Activated CD4-positive, alpha-beta T cell treated with anti-CD3 and anti-CD28 coated beads, Interleukin-2, amount 10 ng/mL, durations not matched to agents 24 days and 14 days (primary cell): ENCODE measurements at regions of chr17 and their contacts with region 1.

Region 1: DNA sequence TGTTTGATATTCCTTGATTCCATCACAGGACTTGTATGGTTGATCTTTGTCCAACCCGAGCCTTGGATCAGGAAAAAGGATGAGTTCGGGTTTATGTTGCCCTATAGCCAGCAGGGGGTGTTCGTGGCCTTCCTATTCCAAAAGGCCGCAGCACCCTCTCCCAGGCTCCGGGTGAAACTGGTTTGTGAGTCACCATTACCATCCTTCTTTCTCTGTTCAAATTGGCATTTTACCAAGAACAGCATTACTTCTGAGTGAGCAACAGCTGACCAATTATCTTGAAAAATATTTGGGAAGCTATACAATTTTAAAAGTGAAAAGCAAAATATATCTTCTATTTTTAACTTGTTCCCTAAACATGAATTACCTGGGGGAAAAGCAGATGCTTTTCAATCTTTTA is 24.3 kb upstream of the KRT20 start:
- DNase-seq: peak; percentile 85
- H3K4me3 Mint-ChIP-seq: no peak overlapping the region
- H3K27ac Mint-ChIP-seq: no peak overlapping the region
- H3K4me1 Mint-ChIP-seq: no peaks in the 10 kb centered on the region
- H3K27me3 Mint-ChIP-seq: peaks cover 27% of the 10 kb centered on the region

Region 2: DNA sequence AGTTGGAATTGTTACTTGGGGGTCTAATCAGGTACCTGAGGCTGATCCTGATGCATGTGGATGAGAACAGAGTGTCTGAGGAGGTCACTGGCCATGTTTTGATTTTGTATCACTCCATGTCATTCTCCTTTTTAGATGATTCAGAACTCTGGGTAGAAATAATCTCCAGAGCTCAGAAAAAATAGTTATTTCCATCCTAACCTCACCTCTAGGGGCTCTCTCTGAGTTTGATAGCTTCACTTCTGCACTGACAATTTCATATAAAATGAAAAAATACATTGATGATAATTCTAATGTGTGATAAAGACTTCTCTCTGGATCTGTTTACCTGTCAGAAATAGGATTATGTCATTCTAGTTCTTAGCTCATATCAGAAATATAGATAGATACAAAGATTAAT is 36.1 kb before region 1 on chr17:
- intact Hi-C with region 1: no loop called
- DNase-seq: no peak
- H3K4me3 Mint-ChIP-seq: no peak overlapping the region
- H3K27ac Mint-ChIP-seq: no peak overlapping the region
- H3K4me1 Mint-ChIP-seq: no peaks in the 10 kb centered on the region
- H3K27me3 Mint-ChIP-seq: peaks cover 35% of the 10 kb centered on the region

Region 3: GRCh38 chr17:41322094-41322902 is 412.9 kb after region 1 on chr17:
- intact Hi-C with region 1: loop called (anchors 1 kb)
- DNase-seq: no peak
- H3K4me3 Mint-ChIP-seq: no peak overlapping the region
- H3K27ac Mint-ChIP-seq: no peak overlapping the region
- H3K4me1 Mint-ChIP-seq: peaks cover 2% of the 10 kb centered on the region
- H3K27me3 Mint-ChIP-seq: peaks cover 2% of the 10 kb centered on the region

Region 4: GRCh38 chr17:41496820-41497408 is 587.6 kb after region 1 on chr17:
- intact Hi-C with region 1: loop called (anchors 2 kb)
- DNase-seq: peak; percentile 91
- H3K4me3 Mint-ChIP-seq: peak overlapping the region; percentile 17
- H3K27ac Mint-ChIP-seq: peak overlapping the region; percentile 30
- H3K4me1 Mint-ChIP-seq: peaks cover 13% of the 10 kb centered on the region
- H3K27me3 Mint-ChIP-seq: peaks cover 4% of the 10 kb centered on the region

Region 5: GRCh38 chr17:41648411-41649195 is 739.3 kb after region 1 on chr17:
- intact Hi-C with region 1: loop called (anchors 1 kb)
- DNase-seq: peak; percentile 96
- H3K4me3 Mint-ChIP-seq: peak overlapping the region; percentile 76
- H3K27ac Mint-ChIP-seq: peak overlapping the region; percentile 23
- H3K4me1 Mint-ChIP-seq: peaks cover 7% of the 10 kb centered on the region
- H3K27me3 Mint-ChIP-seq: peaks cover 1% of the 10 kb centered on the region